Activated CD4-positive, alpha-beta T cell treated with anti-CD3 and anti-CD28 coated beads, Interleukin-2, amount 10 ng/mL, durations not matched to agents 24 days and 14 days (primary cell): ENCODE measurements at regions of chr14 and their contacts with region 1.

Region 1: DNA sequence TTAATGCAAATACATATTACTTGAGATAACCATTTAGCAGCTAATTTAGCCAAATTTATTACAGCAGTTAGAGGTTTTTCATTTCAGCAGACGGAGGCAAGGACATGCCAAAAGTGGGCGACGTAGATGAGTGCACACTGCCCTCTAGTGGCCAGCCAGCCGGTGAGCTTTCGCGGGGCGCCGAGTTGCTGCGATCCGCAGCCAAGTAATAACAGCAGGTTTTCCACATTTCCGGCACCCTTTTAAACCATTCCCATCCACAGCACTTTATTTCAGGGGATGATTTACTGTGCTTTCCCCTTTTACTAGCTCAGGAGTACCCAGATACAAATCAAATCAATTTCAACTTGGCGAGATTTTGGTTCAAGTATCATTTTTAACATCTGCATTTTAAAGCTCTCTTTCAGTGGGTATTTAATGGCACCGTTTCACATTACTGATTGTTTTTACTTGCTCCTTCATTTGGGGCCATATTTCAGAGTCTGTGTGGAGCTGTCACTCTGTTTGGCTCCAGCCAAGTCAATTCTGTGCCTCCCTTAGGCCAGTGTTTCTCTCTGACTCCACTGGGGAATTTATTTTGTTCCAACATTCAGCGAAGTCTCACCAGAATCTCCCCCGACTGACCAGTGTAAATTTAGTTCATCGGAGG is 158.0 kb downstream of the EGLN3 start:
- DNase-seq: peak; percentile 91
- H3K4me3 Mint-ChIP-seq: peak overlapping the region; percentile 78
- H3K27ac Mint-ChIP-seq: no peak overlapping the region
- H3K4me1 Mint-ChIP-seq: peaks cover 21% of the 10 kb centered on the region
- H3K27me3 Mint-ChIP-seq: peaks cover 52% of the 10 kb centered on the region

Region 2: GRCh38 chr14:32710731-32711680 is 1081.8 kb before region 1 on chr14:
- intact Hi-C with region 1: loop called (anchors 5 kb)
- DNase-seq: peak; percentile 62
- H3K4me3 Mint-ChIP-seq: no peak overlapping the region
- H3K27ac Mint-ChIP-seq: no peak overlapping the region
- H3K4me1 Mint-ChIP-seq: no peaks in the 10 kb centered on the region
- H3K27me3 Mint-ChIP-seq: no peaks in the 10 kb centered on the region

Region 3: GRCh38 chr14:32939254-32940065 is 853.4 kb before region 1 on chr14:
- intact Hi-C with region 1: loop called (anchors 5 kb)
- DNase-seq: peak; percentile 69
- H3K4me3 Mint-ChIP-seq: peak overlapping the region; percentile 83
- H3K27ac Mint-ChIP-seq: peak overlapping the region; percentile 66
- H3K4me1 Mint-ChIP-seq: peaks cover 10% of the 10 kb centered on the region
- H3K27me3 Mint-ChIP-seq: peaks cover 62% of the 10 kb centered on the region

Region 4: DNA sequence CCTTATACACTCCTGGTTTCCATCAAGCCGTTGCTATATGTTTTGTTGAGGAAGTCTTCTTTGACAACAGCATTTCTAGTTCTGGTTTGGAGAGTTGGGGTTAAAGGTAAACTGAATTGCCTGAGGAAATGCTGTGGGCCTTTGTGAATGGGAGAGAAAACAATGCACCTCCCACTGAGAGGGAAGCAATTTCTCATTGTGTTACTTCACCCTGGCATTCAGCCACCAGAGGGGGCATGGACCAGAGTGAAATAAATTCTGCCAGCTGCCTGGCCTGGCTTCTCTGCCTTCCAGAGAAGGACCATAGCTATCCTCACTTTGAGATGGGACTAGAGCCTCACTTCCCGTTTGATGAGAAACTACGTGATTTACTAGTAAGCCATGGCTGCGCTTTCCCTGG is 317.2 kb before region 1 on chr14:
- intact Hi-C with region 1: loop called (anchors 5 kb)
- DNase-seq: peak; percentile 69
- H3K4me3 Mint-ChIP-seq: no peak overlapping the region
- H3K27ac Mint-ChIP-seq: no peak overlapping the region
- H3K4me1 Mint-ChIP-seq: no peaks in the 10 kb centered on the region
- H3K27me3 Mint-ChIP-seq: peaks cover 4% of the 10 kb centered on the region

Region 5: DNA sequence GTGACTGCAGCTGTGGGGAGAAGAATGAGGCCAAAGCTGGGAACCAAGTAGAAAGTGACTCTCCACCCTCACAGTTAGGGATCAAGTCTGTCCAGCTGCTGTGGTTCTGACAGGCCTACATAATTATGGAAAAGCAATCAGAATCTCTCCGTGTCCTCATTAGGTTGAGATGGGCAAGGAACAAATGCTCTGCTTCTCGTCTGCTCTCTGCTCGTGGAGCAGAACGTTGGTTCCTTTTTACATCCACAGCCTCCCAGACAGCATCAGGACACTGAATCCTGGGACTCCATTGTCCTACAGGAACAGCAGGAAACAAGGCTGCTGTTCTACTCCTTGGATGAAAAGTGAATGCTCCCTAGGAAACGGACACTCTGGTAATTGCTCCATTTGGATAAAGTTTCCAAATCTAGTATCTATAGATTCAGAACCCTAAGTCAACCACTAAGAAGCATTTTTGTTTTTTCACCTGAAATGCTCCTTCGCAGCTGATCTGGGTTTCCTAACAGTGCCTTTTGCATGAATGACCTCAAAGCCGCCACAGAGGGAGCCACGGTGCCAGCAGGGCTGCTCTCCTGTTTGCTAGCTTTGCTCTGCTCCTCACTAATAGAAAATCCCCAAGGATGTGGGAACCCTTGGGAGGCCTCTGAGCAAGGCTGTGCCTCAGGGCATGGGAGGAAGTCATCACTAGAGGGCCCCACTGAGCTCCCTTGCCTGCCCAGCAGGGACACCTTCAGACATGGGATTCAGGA is 56.0 kb after region 1 on chr14:
- intact Hi-C with region 1: no loop called
- DNase-seq: peak; percentile 69
- H3K4me3 Mint-ChIP-seq: no peak overlapping the region
- H3K27ac Mint-ChIP-seq: no peak overlapping the region
- H3K4me1 Mint-ChIP-seq: peaks cover 18% of the 10 kb centered on the region
- H3K27me3 Mint-ChIP-seq: peaks cover 25% of the 10 kb centered on the region

Region 6: DNA sequence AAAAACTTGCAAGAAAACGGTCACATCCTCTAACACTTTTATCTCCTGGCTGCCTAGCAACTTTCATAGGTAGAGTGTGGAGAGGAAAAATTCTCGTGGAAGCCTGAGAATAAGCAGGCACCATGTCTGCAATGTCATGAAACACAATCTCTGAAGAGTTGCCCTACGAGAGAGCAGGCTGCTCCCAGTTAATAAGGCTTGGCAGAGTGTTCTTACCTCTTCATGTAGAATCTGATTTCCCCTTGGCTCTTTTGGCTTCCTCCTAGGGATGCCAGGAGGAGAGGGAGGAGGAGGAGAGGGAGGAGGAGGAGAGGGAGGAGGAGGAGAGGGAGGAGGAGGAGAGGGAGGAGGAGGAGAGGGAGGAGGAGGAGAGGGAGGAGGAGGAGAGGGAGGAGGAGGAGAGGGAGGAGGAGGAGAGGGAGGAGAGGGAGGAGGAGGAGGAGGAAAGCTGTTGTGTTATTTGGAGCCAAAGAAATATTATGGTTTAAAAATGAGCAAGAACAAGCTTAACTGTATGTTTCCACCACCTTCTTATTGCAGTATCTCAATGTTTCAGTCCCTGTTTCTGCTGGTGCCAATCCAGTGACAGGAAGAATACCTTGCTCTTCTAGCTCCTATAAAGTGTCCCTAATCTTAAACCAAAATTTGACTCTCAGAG is 105.2 kb after region 1 on chr14:
- intact Hi-C with region 1: no loop called
- DNase-seq: peak; percentile 25
- H3K4me3 Mint-ChIP-seq: no peak overlapping the region
- H3K27ac Mint-ChIP-seq: no peak overlapping the region
- H3K4me1 Mint-ChIP-seq: peaks cover 2% of the 10 kb centered on the region
- H3K27me3 Mint-ChIP-seq: peaks cover 14% of the 10 kb centered on the region